ENCODE measurements at regions of chr2 and their contacts with region 1.

Region 1: DNA sequence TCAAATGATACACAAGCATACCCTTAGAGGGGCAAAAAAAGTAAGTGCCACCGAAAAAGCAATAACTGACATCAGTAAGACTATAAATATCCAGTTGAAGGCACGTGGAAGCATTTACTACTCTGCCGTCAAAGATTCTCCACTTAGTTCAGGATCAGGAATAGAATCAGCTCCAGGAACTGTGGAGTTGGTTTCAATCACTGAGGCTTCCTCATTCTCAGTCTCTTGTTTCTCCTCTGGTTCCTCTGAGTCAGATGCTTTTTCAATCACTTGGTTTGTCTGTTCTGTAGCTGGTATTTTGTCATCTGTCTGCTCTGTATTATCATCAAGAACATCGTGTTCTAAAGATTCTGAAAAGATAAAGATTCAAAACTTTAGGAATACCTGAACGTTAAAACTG is 72.2 kb downstream of the LNPK start:
- DNase-seq: peak; percentile 14 to 39
- H3K4me3 ChIP-seq: no peak overlapping the region
- H3K27ac ChIP-seq: no peak overlapping the region
- H3K4me1 ChIP-seq: peaks cover 18% of the 10 kb centered on the region
- H3K27me3 ChIP-seq: no peaks in the 10 kb centered on the region
- CTCF ChIP-seq: no peak

Region 2: DNA sequence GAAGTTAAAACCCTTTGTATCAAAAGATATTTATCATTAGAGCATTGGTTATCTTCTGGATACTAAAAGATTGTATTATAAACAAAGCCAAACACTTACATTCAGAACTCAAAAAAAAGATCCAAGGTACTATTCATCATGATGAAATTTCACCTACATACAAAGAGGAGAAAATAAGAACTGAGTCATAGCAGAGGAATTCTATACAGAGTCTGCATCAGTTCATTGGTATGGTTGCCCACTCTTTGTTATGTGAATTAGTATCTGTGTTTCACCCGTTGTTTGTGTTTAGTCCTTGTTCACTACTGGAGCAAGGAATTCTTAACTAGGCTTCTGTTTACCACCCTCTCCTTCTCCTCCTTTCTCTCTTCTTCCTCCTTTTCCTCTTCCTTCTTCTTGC is 85.7 kb before region 1 on chr2:
- CTCF ChIA-PET with region 1: no interaction called
- POLR2A ChIA-PET with region 1: no interaction called
- intact Hi-C with region 1: loop called (anchors 5 kb)
- DNase-seq: peak in 1 of 2 experiments; percentile 73
- H3K4me3 ChIP-seq: no peak overlapping the region
- H3K27ac ChIP-seq: no peak overlapping the region
- H3K4me1 ChIP-seq: peaks cover 9% of the 10 kb centered on the region
- H3K27me3 ChIP-seq: peaks cover 8% of the 10 kb centered on the region; the same call in 1 of the 2 replicates
- CTCF ChIP-seq: no peak

Region 3: GRCh38 chr2:176657393-176657792 is 727.5 kb after region 1 on chr2:
- CTCF ChIA-PET with region 1: no interaction called
- POLR2A ChIA-PET with region 1: no interaction called
- intact Hi-C with region 1: no loop called
- DNase-seq: no peak
- H3K4me3 ChIP-seq: no peak overlapping the region
- H3K27ac ChIP-seq: no peak overlapping the region
- H3K4me1 ChIP-seq: no peaks in the 10 kb centered on the region
- H3K27me3 ChIP-seq: no peaks in the 10 kb centered on the region
- CTCF ChIP-seq: no peak

Measured in PC-9 (cell line).